GM12878 (cell line): ENCODE measurements at regions of chr4 and their contacts with region 1.

Region 1: GRCh38 chr4:46931981-46932380 is 22.9 kb upstream of the COX7B2 start:
- DNase-seq: peak; percentile 2
- ATAC-seq: peak; percentile 96
- H3K4me3 ChIP-seq: no peak overlapping the region
- H3K27ac ChIP-seq: no peak overlapping the region
- H3K4me1 ChIP-seq: no peaks in the 10 kb centered on the region
- H3K27me3 ChIP-seq: no peaks in the 10 kb centered on the region
- CTCF ChIP-seq: peak; percentile 58 to 76 (median 63)
- EP300 ChIP-seq: no peak
- POLR2A ChIP-seq: no peak
- RAD21 ChIP-seq: peak; percentile 79

Region 2: GRCh38 chr4:46945062-46945461 is 13.1 kb after region 1 on chr4:
- CTCF ChIA-PET with region 1: interaction called, 41 read pairs
- POLR2A ChIA-PET with region 1: no interaction called
- RAD21 ChIA-PET with region 1: interaction called, 4 read pairs
- SMC1A ChIA-PET with region 1: interaction called, 47 read pairs
- in situ Hi-C with region 1: no loop called
- intact Hi-C with region 1: no loop called
- DNase-seq: no peak
- ATAC-seq: no peak
- H3K4me3 ChIP-seq: no peak overlapping the region
- H3K27ac ChIP-seq: no peak overlapping the region
- H3K4me1 ChIP-seq: no peaks in the 10 kb centered on the region
- H3K27me3 ChIP-seq: no peaks in the 10 kb centered on the region
- CTCF ChIP-seq: no peak
- EP300 ChIP-seq: no peak
- POLR2A ChIP-seq: no peak
- RAD21 ChIP-seq: no peak

Region 3: DNA sequence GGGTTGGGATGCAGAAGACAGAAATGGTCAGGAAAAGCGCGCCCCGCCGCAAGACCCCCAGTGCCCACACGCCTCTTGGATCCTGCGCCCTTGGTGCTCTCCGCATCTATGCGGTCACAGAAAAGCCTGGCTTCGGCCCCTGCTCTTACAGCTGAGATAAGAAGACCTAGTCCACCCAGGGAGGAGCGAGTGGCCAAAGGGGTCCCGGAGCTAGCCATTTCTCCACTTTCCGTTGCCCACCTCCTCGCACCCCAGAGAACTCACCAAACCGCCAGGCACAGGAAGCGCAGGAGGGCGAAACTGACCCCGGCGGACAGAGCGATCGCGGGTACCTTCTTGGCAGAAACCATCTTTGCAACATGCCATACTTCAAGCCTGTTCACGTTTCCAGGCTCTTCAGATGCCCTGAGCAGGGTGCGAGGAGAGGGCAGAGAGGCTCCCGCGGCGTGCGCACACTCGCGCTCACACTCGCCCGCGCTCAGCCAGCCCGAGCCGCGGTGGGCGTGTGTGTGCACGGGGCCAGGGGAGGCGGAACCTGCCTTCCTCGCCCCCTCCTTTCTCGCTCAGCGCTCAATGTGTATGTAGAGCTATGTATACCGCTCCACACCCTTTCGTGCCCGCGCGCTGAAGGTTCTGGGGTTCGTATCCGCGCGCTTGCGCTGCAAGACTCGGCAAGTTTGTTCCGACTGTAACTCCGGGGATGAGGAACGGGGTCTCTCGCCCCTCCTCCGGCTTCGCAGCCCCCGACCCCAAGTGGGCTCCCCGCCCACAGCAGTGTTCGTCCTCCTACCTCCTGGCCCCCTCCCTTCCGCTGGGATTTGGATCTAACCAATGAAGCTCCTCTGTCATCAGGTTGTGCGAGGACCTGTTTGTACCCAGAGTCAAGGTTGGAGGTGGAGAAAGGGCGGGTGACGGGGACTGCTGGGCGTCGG is 61.4 kb after region 1 on chr4 and contains the start of gene GABRA4:
- CTCF ChIA-PET with region 1: interaction called, 46 read pairs
- POLR2A ChIA-PET with region 1: no interaction called
- RAD21 ChIA-PET with region 1: interaction called, 3 read pairs
- SMC1A ChIA-PET with region 1: interaction called, 70 read pairs
- in situ Hi-C with region 1: no loop called
- intact Hi-C with region 1: no loop called
- DNase-seq: no peak
- ATAC-seq: peak; percentile 71
- H3K4me3 ChIP-seq: no peak within 1 kb of the TSS
- H3K27ac ChIP-seq: no peak within 1 kb of the TSS
- H3K4me1 ChIP-seq: no peaks in the 10 kb centered on the region
- H3K27me3 ChIP-seq: peaks cover 6 to 9% of the 10 kb centered on the region in 2 experiments
- CTCF ChIP-seq: no peak
- EP300 ChIP-seq: no peak
- POLR2A ChIP-seq: no peak
- RAD21 ChIP-seq: no peak
- polyA plus RNA-seq, gene GABRA4: 1.3 to 2.4 TPM

Region 4: GRCh38 chr4:47010912-47011446 is 79.0 kb after region 1 on chr4:
- CTCF ChIA-PET with region 1: interaction called, 19 read pairs
- POLR2A ChIA-PET with region 1: interaction called, 3 read pairs
- RAD21 ChIA-PET with region 1: interaction called, 18 read pairs
- SMC1A ChIA-PET with region 1: interaction called, 33 read pairs
- in situ Hi-C with region 1: no loop called
- intact Hi-C with region 1: no loop called
- DNase-seq: peak; percentile 54
- ATAC-seq: peak; percentile 86
- H3K4me3 ChIP-seq: no peak overlapping the region
- H3K27ac ChIP-seq: peak overlapping the region; percentile 8; the same call in 1 of the 2 replicates
- H3K4me1 ChIP-seq: peaks cover 4% of the 10 kb centered on the region; the same call in 1 of the 2 replicates
- H3K27me3 ChIP-seq: no peaks in the 10 kb centered on the region
- CTCF ChIP-seq: no peak
- EP300 ChIP-seq: peak; percentile 38 to 51; a peak in 2 of 4 replicates
- POLR2A ChIP-seq: no peak
- RAD21 ChIP-seq: no peak

Region 5: DNA sequence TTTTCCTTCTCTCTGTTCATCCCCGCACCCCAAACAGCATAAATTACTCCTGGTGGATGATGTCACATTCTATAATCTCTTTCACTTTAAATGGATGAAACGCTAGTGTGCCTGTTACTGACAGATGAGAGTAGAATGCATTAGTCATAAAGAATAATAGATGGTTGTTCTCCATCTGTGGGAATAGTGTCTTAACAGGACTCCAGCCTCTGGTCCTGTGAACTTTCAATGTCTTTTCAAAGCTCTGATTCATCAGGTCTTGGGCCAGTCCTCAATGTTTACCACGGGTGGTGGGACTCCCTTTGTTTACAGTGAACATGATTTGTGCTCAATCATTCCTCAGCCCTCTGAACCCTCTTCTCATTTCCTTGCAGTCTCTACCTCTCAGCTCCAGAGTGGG is 282.0 kb after region 1 on chr4:
- CTCF ChIA-PET with region 1: interaction called, 5 read pairs
- POLR2A ChIA-PET with region 1: no interaction called
- RAD21 ChIA-PET with region 1: interaction called, 4 read pairs
- SMC1A ChIA-PET with region 1: no interaction called
- in situ Hi-C with region 1: no loop called
- intact Hi-C with region 1: loop called (anchors 5 kb)
- DNase-seq: no peak
- ATAC-seq: no peak; the same call in 2 of the 3 replicates
- H3K4me3 ChIP-seq: no peak overlapping the region
- H3K27ac ChIP-seq: no peak overlapping the region
- H3K4me1 ChIP-seq: no peaks in the 10 kb centered on the region
- H3K27me3 ChIP-seq: no peaks in the 10 kb centered on the region
- CTCF ChIP-seq: no peak
- EP300 ChIP-seq: no peak
- POLR2A ChIP-seq: no peak
- RAD21 ChIP-seq: no peak